HCT116 (cell line): ENCODE measurements at regions of chr2 and their contacts with region 1.

Region 1: GRCh38 chr2:172131713-172132555 is 29.2 kb upstream of the DLX2 start:
- DNase-seq: no peak
- ATAC-seq: no peak
- H3K4me3 ChIP-seq: no peak overlapping the region
- H3K27ac ChIP-seq: no peak overlapping the region
- H3K4me1 ChIP-seq: no peaks in the 10 kb centered on the region
- H3K27me3 ChIP-seq: no peaks in the 10 kb centered on the region
- CTCF ChIP-seq: no peak
- POLR2A ChIP-seq: no peak
- RAD21 ChIP-seq: no peak

Region 2: GRCh38 chr2:171878481-171878993 is 253.4 kb before region 1 on chr2:
- CTCF ChIA-PET with region 1: no interaction called
- POLR2A ChIA-PET with region 1: no interaction called
- RAD21 ChIA-PET with region 1: no interaction called
- intact Hi-C with region 1: no loop called
- DNase-seq: no peak
- ATAC-seq: no peak
- H3K4me3 ChIP-seq: no peak overlapping the region
- H3K27ac ChIP-seq: no peak overlapping the region
- H3K4me1 ChIP-seq: no peaks in the 10 kb centered on the region
- H3K27me3 ChIP-seq: no peaks in the 10 kb centered on the region
- CTCF ChIP-seq: no peak
- POLR2A ChIP-seq: no peak
- RAD21 ChIP-seq: no peak

Region 3: GRCh38 chr2:172113617-172114016 is 18.3 kb before region 1 on chr2:
- CTCF ChIA-PET with region 1: interaction called, 15 read pairs
- POLR2A ChIA-PET with region 1: no interaction called
- RAD21 ChIA-PET with region 1: no interaction called
- intact Hi-C with region 1: no loop called
- DNase-seq: no peak
- ATAC-seq: peak; percentile 83
- H3K4me3 ChIP-seq: no peak overlapping the region
- H3K27ac ChIP-seq: no peak overlapping the region
- H3K4me1 ChIP-seq: peaks cover 2% of the 10 kb centered on the region in 2 experiments; a peak in 3 of 4 replicates
- H3K27me3 ChIP-seq: no peaks in the 10 kb centered on the region
- CTCF ChIP-seq: peak; percentile 44 to 67 (median 57); a peak in 5 of 6 replicates
- POLR2A ChIP-seq: no peak
- RAD21 ChIP-seq: peak; percentile 83